Astrocyte of the cerebellum (primary cell): ENCODE measurements at regions of chr1 and their contacts with region 1.

Region 1: DNA sequence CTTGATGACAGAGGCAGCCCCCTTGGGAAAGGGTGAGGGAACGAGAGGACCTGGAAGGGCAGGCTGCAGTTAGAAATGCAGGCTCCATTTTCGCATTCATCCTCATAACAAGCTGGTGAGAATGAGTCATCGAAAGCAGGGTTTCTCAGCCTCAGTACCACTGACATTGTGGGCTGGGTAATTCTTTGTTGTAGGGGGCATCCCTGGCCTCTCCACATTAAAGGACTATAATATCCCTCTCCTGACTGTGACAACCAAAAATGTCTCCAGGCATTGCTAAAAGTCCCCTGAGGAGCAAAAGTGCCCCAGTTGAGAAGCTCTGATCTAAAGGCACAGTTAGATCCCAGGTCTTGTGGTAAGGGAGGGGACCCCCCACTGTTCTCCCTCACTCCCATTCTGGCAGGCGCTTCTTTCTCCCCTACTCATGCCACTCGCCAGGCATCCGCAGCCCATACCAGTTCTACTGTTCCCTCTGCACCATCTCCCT is 20.4 kb downstream of the KCNN3 start:
- DNase-seq: no peak
- H3K4me3 ChIP-seq: no peak overlapping the region
- CTCF ChIP-seq: no peak

Region 2: DNA sequence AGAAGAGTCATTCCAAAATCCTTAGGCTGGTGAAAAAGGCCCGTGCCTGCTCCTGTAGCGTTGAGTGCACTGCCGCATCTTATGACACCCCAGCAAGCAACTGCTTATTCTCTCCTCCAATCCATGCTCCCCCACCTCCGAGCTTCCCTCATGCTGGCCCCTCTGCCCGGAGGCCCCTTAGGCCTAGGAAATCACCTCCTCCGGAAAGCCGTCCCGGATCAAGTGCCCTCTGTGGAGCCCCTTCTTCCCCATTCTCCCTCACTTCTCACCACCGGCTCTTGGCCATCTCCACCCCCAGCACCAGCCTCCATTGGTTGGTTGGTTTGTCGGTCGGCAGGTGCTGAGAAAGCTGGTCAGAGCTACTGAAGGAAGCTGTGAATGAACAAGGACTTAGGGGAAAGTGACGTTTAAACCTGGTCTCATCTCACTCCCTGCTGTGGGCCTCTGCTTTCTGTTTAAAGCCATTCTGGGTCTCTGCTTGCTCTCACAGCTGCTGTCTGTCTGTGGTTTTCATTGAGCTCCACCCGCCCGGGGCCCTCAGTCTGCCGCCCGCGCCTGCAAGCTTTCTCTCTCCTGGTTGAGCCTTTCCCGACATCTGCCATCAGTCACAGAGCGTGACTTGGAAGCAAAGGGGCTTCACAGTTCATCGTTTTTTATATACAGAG is 101.8 kb before region 1 on chr1:
- in situ Hi-C with region 1: loop called (anchors 5 kb)
- DNase-seq: no peak
- H3K4me3 ChIP-seq: no peak overlapping the region
- CTCF ChIP-seq: no peak